Gastrocnemius medialis (tissue), 4 donors: ENCODE measurements at regions of chr9 and their contacts with region 1.

Region 1: GRCh38 chr9:121326130-121326838 is 43.8 kb downstream of the STOM start:
- DNase-seq: peak; percentile 74 to 91
- ATAC-seq: peak; percentile 89 to 90
- H3K4me3 ChIP-seq: peak overlapping the region in 2 of 4 donors; percentile 5 to 25
- H3K27ac ChIP-seq: peak overlapping the region; percentile 88 to 91 (median 88)
- H3K4me1 ChIP-seq: peaks cover 33% of the 10 kb centered on the region in 2 donors
- H3K27me3 ChIP-seq: no peaks in the 10 kb centered on the region
- CTCF ChIP-seq: no peak
- POLR2A ChIP-seq: peak; percentile 39 to 55

Region 2: GRCh38 chr9:121369595-121370265 is 43.4 kb after region 1 on chr9 and contains the start of gene STOM:
- in situ Hi-C with region 1: loop called in 2 of 4 experiments (anchors 10 kb)
- intact Hi-C with region 1: loop called (anchors 1 kb)
- DNase-seq: peak; percentile 89 to 92
- ATAC-seq: peak; percentile 68 to 72
- H3K4me3 ChIP-seq: peak within 1 kb of the TSS; percentile 60 to 85 (median 73)
- H3K27ac ChIP-seq: peak within 1 kb of the TSS; percentile 94 to 99 (median 96)
- H3K4me1 ChIP-seq: peaks cover 69 to 78% of the 10 kb centered on the region in 2 donors
- H3K27me3 ChIP-seq: no peaks in the 10 kb centered on the region
- CTCF ChIP-seq: peak in 1 of 5 experiments; percentile 27
- POLR2A ChIP-seq: peak; percentile 99 to 100
- total RNA-seq, gene STOM: 60.0 to 89.5 (median 76.3) TPM

Region 3: GRCh38 chr9:121376214-121376830 is 50.0 kb after region 1 on chr9:
- in situ Hi-C with region 1: loop called in 3 of 4 experiments (anchors 5 to 10 kb)
- intact Hi-C with region 1: no loop called
- DNase-seq: no peak
- ATAC-seq: no peak
- H3K4me3 ChIP-seq: no peak overlapping the region
- H3K27ac ChIP-seq: peak overlapping the region in 1 of 4 donors; percentile 97
- H3K4me1 ChIP-seq: peaks cover 27 to 37% of the 10 kb centered on the region in 2 donors
- H3K27me3 ChIP-seq: no peaks in the 10 kb centered on the region
- CTCF ChIP-seq: peak; percentile 18 to 58 (median 37)
- POLR2A ChIP-seq: no peak

Region 4: GRCh38 chr9:121399883-121400607 is 73.8 kb after region 1 on chr9:
- in situ Hi-C with region 1: loop called in 2 of 4 experiments (anchors 5 kb)
- intact Hi-C with region 1: no loop called
- DNase-seq: no peak
- ATAC-seq: peak; percentile 80 to 87
- H3K4me3 ChIP-seq: no peak overlapping the region
- H3K27ac ChIP-seq: no peak overlapping the region
- H3K4me1 ChIP-seq: no peaks in the 10 kb centered on the region
- H3K27me3 ChIP-seq: no peaks in the 10 kb centered on the region
- CTCF ChIP-seq: peak; percentile 69 to 91 (median 77)
- POLR2A ChIP-seq: no peak

Region 5: GRCh38 chr9:121439711-121440664 is 113.7 kb after region 1 on chr9:
- in situ Hi-C with region 1: no loop called
- intact Hi-C with region 1: no loop called
- DNase-seq: no peak
- ATAC-seq: peak in 1 of 2 donors; percentile 50
- H3K4me3 ChIP-seq: no peak overlapping the region
- H3K27ac ChIP-seq: no peak overlapping the region
- H3K4me1 ChIP-seq: no peaks in the 10 kb centered on the region
- H3K27me3 ChIP-seq: no peaks in the 10 kb centered on the region
- CTCF ChIP-seq: no peak
- POLR2A ChIP-seq: no peak